A549 (cell line): ENCODE measurements at regions of chr12 and their contacts with region 1.

Region 1: DNA sequence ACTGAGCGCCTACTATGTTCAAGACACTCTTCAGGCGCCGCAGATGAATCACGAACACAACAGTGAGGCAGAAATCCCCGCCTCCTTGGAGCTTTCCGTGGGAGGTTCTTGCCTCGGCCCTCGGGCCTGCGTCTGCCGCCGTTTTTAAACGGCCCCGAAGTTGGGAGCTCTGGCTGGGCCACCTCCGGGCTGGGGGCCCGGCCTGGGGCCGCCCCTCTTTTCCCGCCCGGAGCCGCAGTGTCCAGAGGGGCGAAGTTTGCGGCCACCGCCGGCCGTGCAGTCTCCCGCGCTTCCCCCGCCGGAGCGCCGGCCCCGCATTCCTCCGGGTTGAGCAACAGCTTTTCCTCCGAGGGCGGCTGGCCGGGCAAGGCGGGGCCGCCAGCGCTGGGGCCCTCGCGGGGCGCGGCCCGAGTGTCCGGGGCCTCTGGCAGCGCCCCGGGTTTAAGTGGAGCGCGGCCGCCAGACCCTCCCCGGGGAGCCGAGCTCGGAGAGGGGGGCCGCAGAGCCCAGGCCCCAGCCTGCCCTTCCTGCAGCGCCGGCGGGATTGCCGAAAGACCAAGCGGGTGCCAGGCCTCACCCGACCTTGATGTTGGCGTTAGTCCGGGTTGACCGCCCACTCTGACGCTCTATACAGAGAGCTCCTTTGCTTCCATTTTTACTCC is 18.7 kb upstream of the CTDSP2 start:
- DNase-seq: peak; percentile 83 to 89
- ATAC-seq: peak; percentile 93 to 94
- H3K4me3 ChIP-seq: peak overlapping the region; percentile 49
- H3K27ac ChIP-seq: peak overlapping the region; percentile 93 to 99
- H3K4me1 ChIP-seq: peaks cover 25% of the 10 kb centered on the region
- CTCF ChIP-seq: no peak
- EP300 ChIP-seq: no peak
- POLR2A ChIP-seq: no peak; the same call in none of the 2 replicates
- RAD21 ChIP-seq: peak; percentile 17 to 42; a peak in 4 of 5 replicates

Region 2: GRCh38 chr12:57546438-57547383 is 318.5 kb before region 1 on chr12 and contains the start of gene DCTN2:
- CTCF ChIA-PET with region 1: no interaction called
- POLR2A ChIA-PET with region 1: no interaction called
- DNase-seq: peak; percentile 97 to 99
- ATAC-seq: peak; percentile 94 to 98
- H3K4me3 ChIP-seq: peak within 1 kb of the TSS; percentile 89
- H3K27ac ChIP-seq: peak within 1 kb of the TSS; percentile 92 to 96
- H3K4me1 ChIP-seq: peaks cover 19% of the 10 kb centered on the region
- CTCF ChIP-seq: no peak
- EP300 ChIP-seq: no peak
- POLR2A ChIP-seq: peak; percentile 38; the same call in 1 of the 2 replicates
- RAD21 ChIP-seq: no peak
- polyA plus RNA-seq, gene DCTN2: 140 and 169 TPM in 2 replicates

Region 3: GRCh38 chr12:57846577-57847319 is 18.5 kb before region 1 on chr12 and contains the start of gene CTDSP2:
- CTCF ChIA-PET with region 1: interaction called, 8 read pairs
- POLR2A ChIA-PET with region 1: interaction called, 69 read pairs
- DNase-seq: peak; percentile 99
- ATAC-seq: peak; percentile 66 to 82
- H3K4me3 ChIP-seq: peak within 1 kb of the TSS; percentile 97
- H3K27ac ChIP-seq: peak within 1 kb of the TSS; percentile 90 to 100
- H3K4me1 ChIP-seq: peaks cover 35% of the 10 kb centered on the region
- CTCF ChIP-seq: no peak
- EP300 ChIP-seq: no peak
- POLR2A ChIP-seq: peak; percentile 44
- RAD21 ChIP-seq: no peak
- polyA plus RNA-seq, gene CTDSP2: 87.7 and 114 TPM in 2 replicates

Region 4: DNA sequence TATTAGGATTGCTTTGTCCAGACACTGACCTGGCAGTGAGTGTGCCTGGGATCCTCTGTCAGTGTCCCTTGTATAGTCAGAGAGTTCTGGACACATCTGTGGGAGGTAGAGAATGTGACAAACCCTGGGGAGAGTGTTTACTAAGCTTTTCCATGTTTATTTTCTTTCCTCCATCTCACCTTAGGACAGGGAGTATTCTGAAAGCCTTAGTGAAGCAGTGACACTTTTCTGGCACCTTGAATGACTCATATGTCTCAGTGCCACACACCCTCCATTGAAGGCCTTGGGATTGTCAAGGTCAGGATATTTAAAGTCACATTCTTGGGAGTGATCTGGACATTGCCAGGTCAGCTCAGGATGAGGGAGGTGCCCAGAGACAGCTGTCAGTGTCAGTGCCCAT is 16.3 kb after region 1 on chr12:
- CTCF ChIA-PET with region 1: interaction called, 10 read pairs
- POLR2A ChIA-PET with region 1: interaction called, 11 read pairs
- DNase-seq: no peak
- ATAC-seq: no peak
- H3K4me3 ChIP-seq: no peak overlapping the region
- H3K27ac ChIP-seq: no peak overlapping the region
- H3K4me1 ChIP-seq: peaks cover 7% of the 10 kb centered on the region; the same call in 1 of the 3 replicates
- CTCF ChIP-seq: no peak
- EP300 ChIP-seq: no peak
- POLR2A ChIP-seq: no peak
- RAD21 ChIP-seq: no peak

Region 5: GRCh38 chr12:57888409-57889157 is 23.4 kb after region 1 on chr12:
- CTCF ChIA-PET with region 1: interaction called, 5 read pairs
- POLR2A ChIA-PET with region 1: interaction called, 62 read pairs
- DNase-seq: no peak
- ATAC-seq: peak; percentile 27 to 48; a peak in 3 of 6 replicates
- H3K4me3 ChIP-seq: no peak overlapping the region
- H3K27ac ChIP-seq: peak overlapping the region; percentile 60 to 84
- H3K4me1 ChIP-seq: peaks cover 53% of the 10 kb centered on the region
- CTCF ChIP-seq: no peak
- EP300 ChIP-seq: no peak
- POLR2A ChIP-seq: no peak
- RAD21 ChIP-seq: no peak